Body of pancreas (tissue), 4 donors: ENCODE measurements at regions of chr9 and their contacts with region 1.

Region 1: DNA sequence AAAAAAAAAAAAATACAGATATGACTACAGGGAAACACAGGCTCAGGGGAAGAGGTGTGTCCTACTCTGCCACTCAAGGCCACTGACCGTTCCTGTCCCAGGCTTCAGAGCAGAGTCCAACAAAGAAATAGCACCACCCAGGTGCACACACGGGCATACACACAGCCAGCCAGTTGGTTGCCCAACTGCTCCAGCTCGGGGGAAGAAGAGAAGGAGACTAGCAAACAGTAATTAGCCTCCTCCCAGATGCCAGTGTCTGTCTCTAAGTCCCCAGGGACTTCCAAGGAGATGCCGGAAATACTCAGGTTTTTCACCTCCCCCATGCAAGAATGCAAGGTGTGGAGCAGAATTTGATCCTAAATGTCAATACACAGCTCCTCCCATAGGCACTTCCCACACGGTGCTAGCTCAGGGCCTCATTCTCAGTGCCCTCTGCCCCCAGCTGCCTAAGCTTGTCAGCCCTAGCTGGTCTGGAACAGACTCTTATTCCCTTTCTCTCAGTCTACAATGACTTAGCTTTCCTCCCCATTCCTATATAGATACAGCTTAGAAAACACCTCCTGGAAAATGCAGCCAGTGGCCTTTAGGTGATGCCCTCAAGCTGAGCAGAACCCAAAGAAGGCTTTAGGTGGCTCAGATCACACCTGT is 1.7 kb downstream of the MYORG start:
- DNase-seq: peak; percentile 77 to 93 (median 87)
- ATAC-seq: peak; percentile 41
- H3K4me3 ChIP-seq: no peak overlapping the region
- H3K27ac ChIP-seq: peak overlapping the region; percentile 80 to 90 (median 82)
- H3K4me1 ChIP-seq: peaks cover 44% of the 10 kb centered on the region
- H3K27me3 ChIP-seq: no peaks in the 10 kb centered on the region
- CTCF ChIP-seq: peak in 4 of 7 experiments; percentile 25 to 31 (median 28)
- POLR2A ChIP-seq: peak; percentile 48 to 86 (median 69)

Region 2: GRCh38 chr9:34337404-34337803 is 37.6 kb before region 1 on chr9:
- intact Hi-C with region 1: loop called (anchors 5 kb)
- DNase-seq: no peak
- ATAC-seq: no peak
- H3K4me3 ChIP-seq: no peak overlapping the region
- H3K27ac ChIP-seq: no peak overlapping the region
- H3K4me1 ChIP-seq: peaks cover 48% of the 10 kb centered on the region
- H3K27me3 ChIP-seq: no peaks in the 10 kb centered on the region
- CTCF ChIP-seq: no peak
- POLR2A ChIP-seq: no peak

Region 3: GRCh38 chr9:34591248-34591916 is 216.4 kb after region 1 on chr9:
- intact Hi-C with region 1: no loop called
- DNase-seq: peak; percentile 80 to 86 (median 84)
- ATAC-seq: peak; percentile 89
- H3K4me3 ChIP-seq: no peak overlapping the region
- H3K27ac ChIP-seq: no peak overlapping the region
- H3K4me1 ChIP-seq: peaks cover 40% of the 10 kb centered on the region
- H3K27me3 ChIP-seq: peaks cover 3 to 4% of the 10 kb centered on the region in 2 donors
- CTCF ChIP-seq: peak; percentile 84 to 91 (median 89)
- POLR2A ChIP-seq: no peak